Posterior vena cava (tissue), 2 donors: ENCODE measurements at regions of chrX and their contacts with region 1.

Region 1: DNA sequence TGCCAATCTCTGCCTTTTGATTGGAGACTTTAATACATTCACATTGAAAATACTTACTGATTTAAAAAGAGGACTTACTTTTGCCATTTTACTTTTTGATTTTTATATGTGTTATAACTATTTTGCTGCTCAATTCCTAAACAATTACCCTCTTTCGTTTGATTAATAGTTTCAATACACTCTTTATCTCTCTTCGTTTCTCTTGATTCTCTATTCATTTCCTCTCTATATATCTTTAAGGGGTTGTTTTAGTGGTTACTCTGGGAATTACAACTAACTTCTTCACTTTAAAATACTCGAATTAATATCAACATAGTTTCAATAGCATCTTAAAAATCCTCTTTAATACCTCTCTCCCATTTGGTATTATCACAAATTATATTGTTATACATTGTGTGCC is 116.6 kb downstream of the PTCHD1 start:
- DNase-seq: no peak

Region 2: DNA sequence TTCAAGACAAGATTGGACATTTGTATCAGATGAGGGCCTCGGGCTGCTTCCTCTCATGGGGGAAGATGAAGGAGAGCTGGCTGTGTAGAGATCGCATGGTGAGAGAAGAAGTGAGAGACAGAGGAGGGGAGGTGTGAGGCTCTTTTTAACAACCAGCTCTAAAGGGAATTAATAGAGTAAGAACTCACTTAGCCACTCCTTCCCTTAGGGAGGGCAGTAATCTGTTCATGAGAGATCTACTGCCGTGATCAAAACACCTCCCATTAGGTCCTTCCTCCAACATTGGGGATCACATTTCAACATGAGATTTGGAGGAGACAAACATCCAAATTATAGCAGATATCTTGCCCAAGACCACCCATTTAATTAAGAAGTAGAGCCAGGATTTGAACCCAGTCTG is 1467.4 kb after region 1 on chrX:
- intact Hi-C with region 1: loop called in 1 of 2 experiments (anchors 5 kb)
- DNase-seq: no peak